ENCODE measurements at regions of chr17 and their contacts with region 1.

Region 1: GRCh38 chr17:48618256-48618897 is 3.3 kb upstream of the HOXB8 start:
- DNase-seq: peak; percentile 87 to 90 (median 87)
- ATAC-seq: peak; percentile 92 to 99 (median 97)
- H3K4me3 ChIP-seq: no peak overlapping the region
- H3K27ac ChIP-seq: no peak overlapping the region
- H3K4me1 ChIP-seq: peaks cover 0 to 4% (median 0%) of the 10 kb centered on the region in 4 donors
- H3K27me3 ChIP-seq: peaks cover 18 to 75% of the 10 kb centered on the region in 2 donors
- CTCF ChIP-seq: peak; percentile 96 to 97 (median 97)
- POLR2A ChIP-seq: no peak

Region 2: DNA sequence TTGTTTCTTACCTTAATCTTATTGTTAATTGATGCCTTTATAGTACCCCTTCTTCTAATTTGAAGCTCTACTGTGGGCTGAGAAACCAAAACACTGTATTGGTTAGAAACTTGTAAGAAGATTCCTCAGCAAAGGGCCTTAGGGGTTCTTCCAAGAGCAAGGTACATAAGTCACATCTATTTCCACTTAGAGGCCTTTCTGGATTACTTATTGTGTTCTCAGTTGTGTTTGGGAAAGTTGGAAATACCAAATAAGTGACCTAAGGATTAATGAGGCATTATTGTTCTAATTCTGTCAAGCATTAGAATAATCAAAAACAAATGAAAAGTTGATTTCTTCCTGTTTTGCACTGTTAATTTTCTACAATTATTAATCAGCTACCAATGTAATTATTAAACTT is 274.1 kb before region 1 on chr17:
- intact Hi-C with region 1: loop called in 1 of 2 experiments (anchors 10 kb)
- DNase-seq: no peak
- ATAC-seq: no peak
- H3K4me3 ChIP-seq: no peak overlapping the region
- H3K27ac ChIP-seq: no peak overlapping the region
- H3K4me1 ChIP-seq: no peaks in the 10 kb centered on the region
- H3K27me3 ChIP-seq: no peaks in the 10 kb centered on the region
- CTCF ChIP-seq: no peak
- POLR2A ChIP-seq: no peak

Region 3: DNA sequence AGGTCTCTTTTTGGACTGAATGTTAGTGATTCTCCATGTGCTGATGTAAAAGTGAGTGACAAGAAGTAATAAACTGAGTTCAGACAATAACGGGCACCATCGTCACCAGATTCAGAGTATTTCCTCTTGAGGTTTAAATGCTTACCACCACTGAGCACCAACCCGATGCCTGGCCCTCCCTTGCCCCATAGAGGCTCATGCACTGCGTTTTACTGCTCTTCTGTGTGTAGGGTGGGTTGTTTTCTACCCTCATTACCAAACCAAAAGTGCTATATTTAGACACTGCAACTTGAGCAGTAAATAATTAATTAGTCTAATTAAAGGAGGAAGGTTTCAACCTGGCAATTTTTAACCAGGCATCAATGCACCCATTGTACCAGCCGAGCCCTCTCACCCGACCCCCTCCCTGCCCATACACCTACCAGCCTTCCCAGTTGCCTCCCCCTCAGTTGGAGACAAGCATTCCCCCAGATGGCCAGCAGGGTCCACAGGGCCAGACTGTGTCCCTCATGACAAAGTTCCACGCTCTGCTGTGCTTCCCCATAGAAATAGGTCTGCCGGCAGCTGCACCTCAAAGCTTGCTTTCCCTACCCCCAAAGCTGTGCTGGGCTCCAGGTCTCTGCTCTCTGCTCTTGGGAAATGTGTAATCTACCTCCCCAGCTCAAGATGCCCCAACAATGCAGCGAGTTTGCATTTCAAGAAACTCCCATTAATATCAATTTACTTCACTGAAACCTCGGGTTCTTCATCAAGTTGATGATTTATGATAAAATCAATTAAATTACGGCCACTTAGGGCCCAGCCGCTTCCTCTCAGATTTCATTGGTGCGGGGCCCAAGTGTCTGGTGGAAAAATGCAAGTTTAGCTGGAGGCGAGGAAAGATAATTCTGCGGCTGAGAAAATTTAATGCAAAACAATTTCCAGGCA is 56.2 kb before region 1 on chr17:
- intact Hi-C with region 1: no loop called
- DNase-seq: no peak
- ATAC-seq: no peak
- H3K4me3 ChIP-seq: no peak overlapping the region
- H3K27ac ChIP-seq: no peak overlapping the region
- H3K4me1 ChIP-seq: no peaks in the 10 kb centered on the region
- H3K27me3 ChIP-seq: peaks cover 0 to 9% of the 10 kb centered on the region in 2 donors
- CTCF ChIP-seq: no peak
- POLR2A ChIP-seq: no peak

Region 4: GRCh38 chr17:48671697-48672171 is 53.4 kb after region 1 on chr17:
- intact Hi-C with region 1: no loop called
- DNase-seq: peak; percentile 77 to 84 (median 81)
- ATAC-seq: peak; percentile 94 to 99 (median 98)
- H3K4me3 ChIP-seq: peak overlapping the region in 2 of 3 donors; percentile 23 to 32
- H3K27ac ChIP-seq: no peak overlapping the region
- H3K4me1 ChIP-seq: peaks cover 0 to 4% (median 0%) of the 10 kb centered on the region in 4 donors
- H3K27me3 ChIP-seq: no peaks in the 10 kb centered on the region
- CTCF ChIP-seq: peak; percentile 77 to 93 (median 86)
- POLR2A ChIP-seq: no peak

Region 5: GRCh38 chr17:48915459-48916282 is 297.3 kb after region 1 on chr17:
- intact Hi-C with region 1: no loop called
- DNase-seq: peak in 1 of 3 donors; percentile 42
- ATAC-seq: peak; percentile 54 to 98 (median 68)
- H3K4me3 ChIP-seq: no peak overlapping the region
- H3K27ac ChIP-seq: peak overlapping the region in 1 of 3 donors; percentile 29
- H3K4me1 ChIP-seq: peaks cover 0 to 4% (median 2%) of the 10 kb centered on the region in 4 donors
- H3K27me3 ChIP-seq: no peaks in the 10 kb centered on the region
- CTCF ChIP-seq: no peak
- POLR2A ChIP-seq: no peak